Natural killer cell (primary cell): ENCODE measurements at regions of chr2 and their contacts with region 1.

Region 1: DNA sequence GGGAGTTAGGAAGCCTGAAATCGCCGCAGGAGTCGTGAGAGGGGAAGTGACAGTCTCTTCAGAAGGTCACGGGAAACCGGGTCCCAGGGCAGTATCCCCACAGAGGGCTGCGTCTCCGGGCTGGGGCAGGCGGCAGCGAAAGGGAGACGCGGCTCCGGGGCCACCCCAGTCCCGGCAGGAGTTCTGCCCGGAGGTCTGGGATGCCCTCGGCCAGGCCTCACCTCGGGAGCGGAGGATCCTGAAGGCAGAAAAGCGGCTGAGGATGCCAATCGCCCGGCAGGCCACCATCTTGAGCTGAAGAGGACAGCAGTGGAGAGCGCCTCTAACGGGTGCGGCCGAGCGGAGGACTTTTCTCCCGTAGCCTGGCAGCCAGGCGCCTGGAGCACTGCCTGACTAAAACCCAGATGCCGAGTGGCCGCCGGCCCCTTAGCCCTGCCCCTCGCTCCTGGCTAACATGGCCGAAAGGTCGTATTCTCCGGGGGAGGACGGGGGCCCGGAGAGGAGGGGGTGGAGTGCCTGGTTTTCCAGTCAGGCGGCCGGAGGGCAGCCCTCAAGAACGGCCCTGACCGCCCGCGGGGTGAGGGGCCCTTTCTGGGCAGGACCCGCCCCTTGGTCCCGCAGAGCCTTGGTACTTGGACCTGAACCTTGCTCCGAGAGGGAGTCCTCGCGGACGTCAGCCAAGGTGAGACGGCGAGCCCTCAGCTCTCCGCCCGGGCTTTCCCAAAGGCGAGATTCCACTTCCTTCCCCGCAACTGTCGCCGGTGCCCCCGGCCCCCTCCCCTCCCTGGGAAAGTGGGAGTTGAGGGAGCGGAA is at the starts of genes HADHA and HADHB:
- DNase-seq: peak; percentile 83 to 91
- ATAC-seq: peak; percentile 82 to 94 (median 87)
- H3K4me3 ChIP-seq: peak within 1 kb of the TSS; percentile 79
- H3K4me3 Mint-ChIP-seq: peak within 1 kb of the TSS; percentile 100
- H3K27ac ChIP-seq: peak within 1 kb of the TSS; percentile 97
- H3K27ac Mint-ChIP-seq: peak within 1 kb of the TSS; percentile 91 to 95
- H3K4me1 ChIP-seq: peaks cover 21% of the 10 kb centered on the region
- H3K4me1 Mint-ChIP-seq: peaks cover 58 to 60% of the 10 kb centered on the region in 2 donors
- H3K27me3 ChIP-seq: no peaks in the 10 kb centered on the region
- H3K27me3 Mint-ChIP-seq: no peaks in the 10 kb centered on the region
- CTCF ChIP-seq: no peak
- total RNA-seq, gene HADHA: 66.6 to 76.1 (median 68.9) TPM
- total RNA-seq, gene HADHB: 43.1 to 58.8 (median 53.0) TPM

Region 2: GRCh38 chr2:26299471-26300101 is 55.1 kb after region 1 on chr2:
- intact Hi-C with region 1: loop called (anchors 2 kb)
- DNase-seq: peak in 1 of 2 donors; percentile 61
- ATAC-seq: peak; percentile 62 to 79 (median 75)
- H3K4me3 ChIP-seq: peak overlapping the region; percentile 65
- H3K4me3 Mint-ChIP-seq: no peak overlapping the region
- H3K27ac ChIP-seq: peak overlapping the region; percentile 59
- H3K27ac Mint-ChIP-seq: no peak overlapping the region
- H3K4me1 ChIP-seq: peaks cover 20% of the 10 kb centered on the region
- H3K4me1 Mint-ChIP-seq: no peaks in the 10 kb centered on the region
- H3K27me3 ChIP-seq: no peaks in the 10 kb centered on the region
- H3K27me3 Mint-ChIP-seq: no peaks in the 10 kb centered on the region
- CTCF ChIP-seq: no peak

Region 3: DNA sequence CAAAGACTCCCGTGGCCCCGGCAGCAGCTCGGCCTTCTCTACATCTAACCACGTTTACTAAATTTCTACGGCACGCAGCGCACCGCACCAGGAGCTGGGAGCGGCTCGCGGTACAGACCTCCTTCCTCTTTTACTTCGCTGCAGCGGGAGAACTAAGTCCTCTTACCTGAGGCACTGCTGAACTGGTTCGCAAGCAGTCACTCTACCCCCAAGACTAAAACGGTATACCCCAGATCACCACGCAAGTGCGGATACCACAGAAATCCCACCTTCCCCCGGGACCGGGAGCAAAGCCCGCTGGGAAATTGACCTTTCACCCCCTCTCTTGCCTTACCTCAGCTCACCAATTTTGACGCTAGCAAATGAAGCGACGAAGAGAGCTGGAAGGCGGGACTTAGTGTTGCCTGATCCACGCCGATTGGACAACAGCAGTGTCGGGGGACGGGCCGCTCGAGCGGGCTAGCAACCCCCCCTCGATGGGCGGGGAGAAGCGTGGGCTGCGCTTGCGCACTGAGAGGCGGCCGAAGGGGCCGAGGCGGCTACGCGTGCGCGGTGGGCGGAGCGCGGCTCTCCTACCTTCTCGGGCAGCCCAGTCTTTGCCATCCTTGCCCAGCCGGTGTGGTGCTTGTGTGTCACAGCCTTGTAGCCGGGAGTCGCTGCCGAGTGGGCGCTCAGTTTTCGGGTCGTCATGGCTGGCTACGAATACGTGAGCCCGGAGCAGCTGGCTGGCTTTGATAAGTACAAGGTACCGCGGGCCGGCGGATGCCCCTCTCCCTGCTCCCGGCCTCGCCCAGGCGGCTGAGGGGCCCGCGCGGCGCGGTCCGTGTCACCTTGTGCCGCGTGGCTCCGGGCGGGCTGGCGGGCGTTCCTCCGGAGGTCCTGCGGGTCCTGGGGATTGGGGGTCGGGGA is 101.3 kb after region 1 on chr2 and contains the start of gene SELENOI:
- intact Hi-C with region 1: loop called (anchors 1 kb)
- DNase-seq: peak; percentile 99 to 100
- ATAC-seq: peak; percentile 92 to 98 (median 95)
- H3K4me3 ChIP-seq: peak within 1 kb of the TSS; percentile 90
- H3K4me3 Mint-ChIP-seq: peak within 1 kb of the TSS; percentile 99
- H3K27ac ChIP-seq: peak within 1 kb of the TSS; percentile 91
- H3K27ac Mint-ChIP-seq: peak within 1 kb of the TSS; percentile 95 to 99
- H3K4me1 ChIP-seq: peaks cover 16% of the 10 kb centered on the region
- H3K4me1 Mint-ChIP-seq: peaks cover 35 to 38% of the 10 kb centered on the region in 2 donors
- H3K27me3 ChIP-seq: no peaks in the 10 kb centered on the region
- H3K27me3 Mint-ChIP-seq: no peaks in the 10 kb centered on the region
- CTCF ChIP-seq: no peak
- total RNA-seq, gene SELENOI: 28.1 to 47.6 (median 36.4) TPM

Region 4: GRCh38 chr2:26438526-26438925 is 194.0 kb after region 1 on chr2:
- intact Hi-C with region 1: no loop called
- DNase-seq: no peak
- ATAC-seq: no peak
- H3K4me3 ChIP-seq: no peak overlapping the region
- H3K4me3 Mint-ChIP-seq: no peak overlapping the region
- H3K27ac ChIP-seq: no peak overlapping the region
- H3K27ac Mint-ChIP-seq: no peak overlapping the region
- H3K4me1 ChIP-seq: no peaks in the 10 kb centered on the region
- H3K4me1 Mint-ChIP-seq: no peaks in the 10 kb centered on the region
- H3K27me3 ChIP-seq: no peaks in the 10 kb centered on the region
- H3K27me3 Mint-ChIP-seq: peaks cover 5 to 12% of the 10 kb centered on the region in 2 donors
- CTCF ChIP-seq: no peak